ENCODE measurements at regions of chr9 and their contacts with region 1.

Region 1: DNA sequence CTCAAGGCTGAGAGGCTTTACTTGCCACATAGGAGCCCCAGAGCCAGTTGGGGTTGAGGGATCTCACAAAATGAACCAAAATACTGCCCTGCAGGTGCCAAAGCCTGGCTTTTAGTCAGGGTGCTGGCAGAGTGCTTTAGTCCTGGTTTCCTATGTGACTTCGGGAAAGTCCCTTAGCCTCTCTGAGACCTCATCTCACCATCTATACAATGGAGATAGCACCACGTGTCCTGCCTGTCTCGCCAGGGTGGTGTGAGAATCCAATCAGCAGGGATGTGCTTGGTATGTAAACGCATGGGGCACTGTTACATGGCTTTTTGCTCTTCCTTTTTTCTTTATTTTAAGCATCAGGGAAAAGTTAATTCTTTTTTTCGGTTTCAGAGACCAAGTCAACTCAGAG is 68.3 kb downstream of the SHB start:
- DNase-seq: no peak
- ATAC-seq: peak; percentile 52
- H3K4me3 Mint-ChIP-seq: no peak overlapping the region
- H3K27ac Mint-ChIP-seq: no peak overlapping the region
- H3K4me1 Mint-ChIP-seq: peaks cover 2% of the 10 kb centered on the region
- H3K27me3 Mint-ChIP-seq: no peaks in the 10 kb centered on the region

Region 2: GRCh38 chr9:37988041-37988440 is 12.7 kb before region 1 on chr9:
- CTCF ChIA-PET with region 1: no interaction called
- POLR2A ChIA-PET with region 1: no interaction called
- intact Hi-C with region 1: loop called in 1 of 2 experiments (anchors 1 kb)
- DNase-seq: no peak
- ATAC-seq: no peak
- H3K4me3 Mint-ChIP-seq: no peak overlapping the region
- H3K27ac Mint-ChIP-seq: no peak overlapping the region
- H3K4me1 Mint-ChIP-seq: peaks cover 3% of the 10 kb centered on the region
- H3K27me3 Mint-ChIP-seq: peaks cover 3% of the 10 kb centered on the region

Region 3: GRCh38 chr9:38068866-38069629 is 68.3 kb after region 1 on chr9 and contains the start of gene SHB:
- CTCF ChIA-PET with region 1: no interaction called
- POLR2A ChIA-PET with region 1: no interaction called
- intact Hi-C with region 1: no loop called
- DNase-seq: peak; percentile 86
- ATAC-seq: peak; percentile 80
- H3K4me3 Mint-ChIP-seq: peak within 1 kb of the TSS; percentile 56
- H3K27ac Mint-ChIP-seq: no peak within 1 kb of the TSS
- H3K4me1 Mint-ChIP-seq: peaks cover 15% of the 10 kb centered on the region
- H3K27me3 Mint-ChIP-seq: peaks cover 7% of the 10 kb centered on the region
- total RNA-seq, gene SHB: 1.2 to 1.3 TPM